ENCODE measurements at regions of chr17 and their contacts with region 1.

Region 1: GRCh38 chr17:74798239-74798707 is 22.1 kb upstream of the NAT9 start:
- DNase-seq: no peak
- ATAC-seq: no peak
- H3K4me3 ChIP-seq: no peak overlapping the region
- H3K27ac ChIP-seq: no peak overlapping the region
- H3K4me1 ChIP-seq: no peaks in the 10 kb centered on the region
- H3K27me3 ChIP-seq: no peaks in the 10 kb centered on the region
- CTCF ChIP-seq: no peak

Region 2: GRCh38 chr17:74599448-74599939 is 198.8 kb before region 1 on chr17:
- intact Hi-C with region 1: no loop called
- DNase-seq: peak in 1 of 4 donors; percentile 14
- ATAC-seq: peak; percentile 64
- H3K4me3 ChIP-seq: no peak overlapping the region
- H3K27ac ChIP-seq: peak overlapping the region in 1 of 2 donors; percentile 41
- H3K4me1 ChIP-seq: peaks cover 0 to 41% of the 10 kb centered on the region in 2 donors
- H3K27me3 ChIP-seq: peaks cover 0 to 68% of the 10 kb centered on the region in 2 donors
- CTCF ChIP-seq: no peak

Region 3: DNA sequence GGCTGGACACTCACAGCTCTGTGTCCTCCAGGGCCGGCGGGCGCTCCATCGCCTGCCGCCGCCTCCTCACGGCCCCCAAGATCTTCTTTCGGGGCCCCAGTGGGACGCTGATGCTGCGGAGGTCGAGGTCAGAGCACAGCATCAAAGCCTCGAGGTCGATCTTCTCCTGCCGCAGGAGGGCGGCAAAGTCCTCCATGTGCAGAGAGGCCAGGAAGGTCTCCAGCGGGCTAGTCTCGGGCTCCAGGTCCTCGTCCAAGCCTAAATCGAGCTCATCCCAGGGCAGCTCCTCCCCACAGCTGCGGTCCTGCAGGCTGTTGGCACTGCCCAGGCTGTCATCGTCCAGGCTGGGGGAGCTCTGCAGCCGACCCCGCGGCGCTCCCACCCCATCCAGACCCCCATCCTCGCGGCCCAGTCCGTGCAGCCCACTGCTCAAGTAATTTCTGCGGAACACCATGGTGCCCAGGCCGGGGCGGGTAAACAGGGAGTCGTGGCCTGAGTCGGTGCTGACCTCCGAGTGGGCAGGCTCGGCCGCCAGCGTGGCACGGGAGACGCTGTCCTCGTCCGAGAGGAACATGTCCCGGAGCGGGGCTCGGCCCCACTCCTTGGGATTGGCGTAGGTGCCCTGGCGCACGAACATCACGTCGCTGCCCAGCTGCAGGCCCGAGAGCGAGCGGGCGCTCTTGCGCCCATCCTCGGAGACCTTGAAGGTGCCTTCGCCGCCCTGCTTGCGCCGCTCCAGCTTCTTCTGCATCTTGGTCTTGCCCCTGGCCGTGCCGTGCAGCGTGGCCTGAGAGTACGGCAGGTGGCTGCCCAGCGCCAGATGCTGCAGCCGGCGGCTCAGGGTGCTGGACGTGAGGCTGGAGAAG is 121.4 kb after region 1 on chr17:
- intact Hi-C with region 1: loop called in 1 of 2 experiments (anchors 5 kb)
- DNase-seq: no peak
- ATAC-seq: peak; percentile 5
- H3K4me3 ChIP-seq: no peak overlapping the region
- H3K27ac ChIP-seq: no peak overlapping the region
- H3K4me1 ChIP-seq: peaks cover 16 to 21% of the 10 kb centered on the region in 2 donors
- H3K27me3 ChIP-seq: peaks cover 35 to 96% of the 10 kb centered on the region in 2 donors
- CTCF ChIP-seq: no peak

Measured in left lung (tissue), 14 donors.